Activated CD4-positive, alpha-beta memory T cell treated with anti-CD3 and anti-CD28 coated beads for 36 hours (primary cell): ENCODE measurements at regions of chr12 and their contacts with region 1.

Region 1: GRCh38 chr12:38921025-38921677 is 15.8 kb upstream of the CPNE8 start:
- DNase-seq: peak; percentile 46
- H3K4me3 Mint-ChIP-seq: no peak overlapping the region
- H3K27ac Mint-ChIP-seq: no peak overlapping the region
- H3K4me1 Mint-ChIP-seq: no peaks in the 10 kb centered on the region
- H3K27me3 Mint-ChIP-seq: no peaks in the 10 kb centered on the region

Region 2: GRCh38 chr12:38324896-38325295 is 596.3 kb before region 1 on chr12:
- CTCF ChIA-PET with region 1: no interaction called
- POLR2A ChIA-PET with region 1: no interaction called
- intact Hi-C with region 1: loop called (anchors 5 kb)
- DNase-seq: no peak
- H3K4me3 Mint-ChIP-seq: no peak overlapping the region
- H3K27ac Mint-ChIP-seq: no peak overlapping the region
- H3K4me1 Mint-ChIP-seq: no peaks in the 10 kb centered on the region
- H3K27me3 Mint-ChIP-seq: no peaks in the 10 kb centered on the region